Left cardiac atrium (tissue), 4 donors: ENCODE measurements at regions of chr22 and their contacts with region 1.

Region 1: GRCh38 chr22:37686002-37686982 is at the start of gene NOL12:
- DNase-seq: peak; percentile 82
- ATAC-seq: peak; percentile 87 to 94
- total RNA-seq, gene NOL12: 13.7 TPM

Region 2: DNA sequence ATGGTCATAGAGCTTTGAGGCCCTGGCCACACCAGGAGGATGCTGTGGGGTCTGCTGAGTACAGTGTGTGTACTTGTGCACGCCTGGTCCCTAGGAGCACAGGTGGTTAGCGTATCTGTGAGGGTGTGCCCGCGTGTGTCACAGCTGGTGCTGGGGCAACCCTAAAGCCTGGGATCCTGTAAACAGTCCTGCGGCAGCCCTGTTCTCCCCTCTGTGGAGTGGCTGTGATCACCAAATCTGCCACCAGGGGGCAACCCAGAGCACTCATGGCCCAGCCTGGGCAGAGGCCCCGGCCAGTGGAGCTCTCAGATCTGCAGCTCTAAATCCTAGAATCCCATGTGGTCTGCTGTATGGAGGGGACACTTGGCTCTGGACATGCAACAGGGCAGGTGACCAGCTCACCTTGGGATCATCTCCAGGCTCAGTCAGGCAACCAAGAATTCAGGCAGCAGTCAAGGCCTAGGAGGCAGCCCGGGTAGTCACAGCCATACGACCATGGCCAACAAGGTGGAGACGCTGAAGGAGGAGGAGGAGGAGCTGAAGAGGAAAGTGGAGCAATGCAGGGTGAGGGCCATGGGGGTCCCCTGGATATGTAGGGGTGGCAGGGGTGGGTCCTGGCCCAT is 43.0 kb before region 1 on chr22:
- intact Hi-C with region 1: loop called (anchors 2 to 5 kb)
- DNase-seq: peak; percentile 86
- ATAC-seq: peak; percentile 76 to 81

Region 3: DNA sequence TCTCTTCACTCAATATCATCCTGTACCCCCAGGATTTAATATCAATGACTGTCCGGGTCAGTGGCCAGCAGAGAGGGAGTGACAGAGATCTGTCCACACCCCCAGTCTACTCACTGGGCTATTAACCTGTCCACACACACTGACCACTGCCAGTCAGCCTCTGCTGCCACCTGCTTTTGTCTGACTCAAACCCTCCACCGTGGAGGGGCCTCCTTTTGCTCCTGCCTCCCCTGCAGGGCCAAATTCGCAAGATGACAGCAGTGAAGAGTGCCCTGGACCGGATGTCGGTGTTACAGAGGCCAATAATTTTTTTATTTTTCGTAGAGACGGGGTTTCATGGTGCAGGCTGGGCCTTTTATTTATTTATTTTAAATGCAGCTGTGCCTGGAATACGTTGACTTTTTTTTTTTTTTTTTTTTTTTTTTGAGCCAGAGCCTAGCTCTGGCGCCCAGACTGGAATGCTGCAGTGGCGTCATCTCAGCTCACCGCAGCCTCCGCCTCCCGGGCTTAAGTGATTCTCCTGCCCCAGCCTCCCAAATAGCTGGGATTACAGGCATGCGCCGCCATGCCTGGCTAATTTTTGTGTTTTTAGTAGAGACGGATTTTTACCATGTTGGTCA is 22.7 kb before region 1 on chr22:
- intact Hi-C with region 1: loop called in 1 of 2 experiments (anchors 2 kb)
- DNase-seq: no peak
- ATAC-seq: peak in 1 of 2 donors; percentile 3

Region 4: DNA sequence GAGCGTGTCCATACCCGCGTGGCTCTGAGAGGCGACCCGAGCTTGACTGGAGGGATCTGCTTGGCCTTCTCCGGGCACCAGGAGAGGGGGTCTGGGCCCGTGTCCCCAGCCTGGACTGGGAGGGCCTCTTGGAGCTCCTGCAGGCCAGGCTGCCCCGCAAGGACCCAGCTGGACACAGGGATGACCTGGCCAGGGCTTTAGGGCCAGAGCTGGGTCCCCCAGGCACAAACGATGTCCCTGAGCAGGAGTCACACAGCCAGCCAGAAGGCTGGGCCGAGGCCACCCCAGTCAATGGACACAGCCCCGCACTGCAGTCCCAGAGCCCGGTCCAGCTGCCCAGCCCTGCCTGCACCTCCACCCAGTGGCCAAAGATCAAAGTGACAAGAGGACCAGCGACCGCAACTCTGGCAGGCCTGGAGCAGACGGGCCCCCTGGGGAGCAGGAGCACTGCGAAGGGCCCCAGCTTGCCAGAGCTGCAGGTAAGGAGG is 48.7 kb after region 1 on chr22:
- intact Hi-C with region 1: loop called (anchors 5 kb)
- DNase-seq: peak; percentile 62
- ATAC-seq: peak; percentile 12 to 27

Region 5: DNA sequence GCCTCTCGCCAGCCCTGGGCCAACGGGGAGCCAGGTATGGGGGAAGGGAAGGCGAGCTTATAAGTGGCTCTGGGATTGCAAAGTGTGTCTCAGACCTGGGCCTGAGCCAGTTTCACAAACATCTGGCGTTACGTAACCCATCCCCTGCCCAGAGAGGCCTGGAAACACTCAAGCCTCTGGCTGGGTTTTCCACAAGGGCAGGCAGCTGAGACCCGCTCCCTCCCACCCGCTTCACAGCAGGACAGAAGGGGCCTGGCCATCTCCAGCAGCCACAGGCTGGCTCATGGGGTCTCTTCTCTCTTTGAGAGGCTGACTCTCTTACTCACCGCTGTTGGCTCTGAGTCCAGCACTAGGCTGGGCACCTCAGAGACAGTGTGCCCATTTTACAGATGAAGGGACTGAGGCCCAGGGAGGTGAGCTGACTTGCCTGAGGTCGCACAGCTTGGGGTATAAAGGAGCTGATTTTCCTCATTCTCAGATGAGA is 55.1 kb after region 1 on chr22:
- intact Hi-C with region 1: loop called (anchors 5 kb)
- DNase-seq: peak; percentile 83
- ATAC-seq: peak; percentile 58 to 60

Region 6: DNA sequence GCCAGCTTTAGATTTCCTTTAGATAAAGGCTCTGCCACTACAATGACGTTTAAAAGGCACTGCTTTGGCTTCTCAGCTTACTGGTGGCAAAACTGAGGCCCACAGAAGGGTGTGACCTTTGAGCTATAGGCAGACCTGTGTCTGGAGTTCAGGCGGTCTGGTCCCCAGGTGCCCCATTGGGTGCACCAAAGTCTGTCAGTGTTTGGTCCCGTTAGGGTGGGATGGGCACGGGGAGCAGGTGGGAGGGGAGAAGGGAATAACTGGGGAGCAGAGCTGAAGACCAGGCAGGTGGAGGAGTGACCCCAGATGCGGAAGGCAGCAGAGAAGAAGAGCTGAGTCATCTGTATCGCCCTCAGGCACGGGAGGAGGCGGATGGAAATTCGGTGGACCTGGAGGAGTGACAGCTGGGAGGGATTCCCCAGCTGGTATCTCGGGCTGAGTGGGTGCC is 76.1 kb after region 1 on chr22:
- intact Hi-C with region 1: no loop called
- DNase-seq: no peak
- ATAC-seq: peak in 1 of 2 donors; percentile 14

Region 7: GRCh38 chr22:37880668-37881440 is 194.6 kb after region 1 on chr22:
- intact Hi-C with region 1: no loop called
- DNase-seq: no peak
- ATAC-seq: no peak

Region 8: GRCh38 chr22:37953437-37954179 is 267.3 kb after region 1 on chr22 and contains the starts of genes C22orf23 and POLR2F:
- intact Hi-C with region 1: no loop called
- DNase-seq: peak; percentile 98
- ATAC-seq: peak; percentile 98 to 99
- total RNA-seq, gene C22orf23: 0.21 TPM in 1 of 2 donors, not detected in the other
- total RNA-seq, gene POLR2F: 62.6 to 68.1 TPM